Transverse colon (tissue), 4 donors: ENCODE measurements at regions of chr18 and their contacts with region 1.

Region 1: GRCh38 chr18:77635451-77635850 is 385.8 kb downstream of the GALR1 start:
- DNase-seq: no peak
- H3K4me3 ChIP-seq: no peak overlapping the region
- H3K27ac ChIP-seq: no peak overlapping the region
- H3K4me1 ChIP-seq: no peaks in the 10 kb centered on the region
- H3K27me3 ChIP-seq: no peaks in the 10 kb centered on the region
- CTCF ChIP-seq: no peak
- EP300 ChIP-seq: no peak
- POLR2A ChIP-seq: no peak

Region 2: GRCh38 chr18:77749089-77749488 is 113.6 kb after region 1 on chr18:
- in situ Hi-C with region 1: loop called in 1 of 4 experiments (anchors 25 kb)
- intact Hi-C with region 1: no loop called
- DNase-seq: no peak
- H3K4me3 ChIP-seq: no peak overlapping the region
- H3K27ac ChIP-seq: no peak overlapping the region
- H3K4me1 ChIP-seq: no peaks in the 10 kb centered on the region
- H3K27me3 ChIP-seq: no peaks in the 10 kb centered on the region
- CTCF ChIP-seq: peak in 3 of 5 experiments; percentile 22 to 34 (median 29)
- EP300 ChIP-seq: no peak
- POLR2A ChIP-seq: no peak

Region 3: DNA sequence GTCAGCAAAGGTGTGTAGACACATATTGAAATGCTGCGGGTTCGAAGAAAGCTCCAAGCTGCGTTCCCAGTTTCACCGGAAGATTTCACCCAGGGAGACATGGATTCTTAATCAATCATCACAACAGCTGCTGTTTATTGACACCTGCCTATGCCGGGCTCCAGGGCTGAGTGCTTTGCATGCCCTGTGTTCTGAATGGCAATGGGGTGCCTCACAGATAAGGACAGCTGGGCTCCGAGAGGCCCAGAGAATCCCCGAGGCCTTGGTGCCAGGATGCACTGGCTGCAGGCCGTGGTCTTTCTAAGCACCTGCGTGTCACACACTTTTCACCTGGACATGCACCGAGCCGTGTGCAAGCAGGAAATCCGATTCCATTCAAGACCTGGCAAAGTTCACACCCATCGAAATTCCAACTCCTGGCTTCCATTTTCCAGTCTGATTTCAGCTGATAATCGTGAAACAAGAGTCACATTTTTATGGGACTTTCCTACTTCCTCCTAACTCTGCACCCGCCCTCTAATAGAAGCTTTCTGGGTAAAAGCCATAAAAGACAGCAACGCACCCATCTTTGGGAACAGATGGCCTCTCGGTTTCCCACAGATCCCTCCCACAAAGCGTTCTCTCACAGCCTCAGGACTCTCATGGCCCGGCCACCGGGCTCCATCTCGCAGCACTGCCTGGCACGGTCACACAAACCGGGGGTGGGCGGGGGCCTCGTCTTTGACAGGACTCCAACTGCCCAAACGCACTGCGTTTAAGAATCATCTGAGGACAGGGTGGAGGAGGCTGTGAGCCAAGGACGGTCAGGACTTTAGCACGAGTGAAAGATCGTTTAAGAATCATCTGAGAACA is 1098.5 kb after region 1 on chr18:
- in situ Hi-C with region 1: no loop called
- intact Hi-C with region 1: loop called (anchors 5 kb)
- DNase-seq: no peak
- H3K4me3 ChIP-seq: no peak overlapping the region
- H3K27ac ChIP-seq: peak overlapping the region in 1 of 4 donors; percentile 12
- H3K4me1 ChIP-seq: peaks cover 0 to 3% (median 0%) of the 10 kb centered on the region in 4 donors
- H3K27me3 ChIP-seq: no peaks in the 10 kb centered on the region
- CTCF ChIP-seq: no peak
- EP300 ChIP-seq: no peak
- POLR2A ChIP-seq: no peak